Activated T-helper 1 cell treated with anti-CD3 and anti-CD28 coated beads, Interleukin-12 subunit alpha, Interleukin-12 subunit beta, Interleukin-2, Interleukin-4 antibody, amounts not matched to agents 30 ng/mL and 10 ng/mL and 1 ng/mL, durations not matched to agents 14 hours and 24 hours and 36 hours (primary cell): ENCODE measurements at regions of chr9 and their contacts with region 1.

Region 1: GRCh38 chr9:122827761-122828093 is 661 bp downstream of the PDCL start:
- DNase-seq: no peak
- H3K4me3 Mint-ChIP-seq: peak overlapping the region; percentile 96
- H3K27ac Mint-ChIP-seq: peak overlapping the region; percentile 84
- H3K4me1 Mint-ChIP-seq: peaks cover 36% of the 10 kb centered on the region
- H3K27me3 Mint-ChIP-seq: no peaks in the 10 kb centered on the region

Region 2: GRCh38 chr9:122264360-122265148 is 563.2 kb before region 1 on chr9 and contains the starts of genes MRRF and RBM18:
- intact Hi-C with region 1: loop called (anchors 2 kb)
- DNase-seq: peak; percentile 89
- H3K4me3 Mint-ChIP-seq: peak within 1 kb of the TSS; percentile 97
- H3K27ac Mint-ChIP-seq: peak within 1 kb of the TSS; percentile 100
- H3K4me1 Mint-ChIP-seq: peaks cover 38% of the 10 kb centered on the region
- H3K27me3 Mint-ChIP-seq: no peaks in the 10 kb centered on the region
- total RNA-seq, gene MRRF: 58.8 and 66.0 TPM in 2 replicates
- total RNA-seq, gene RBM18: 29.9 and 31.5 TPM in 2 replicates

Region 3: GRCh38 chr9:122754825-122755224 is 72.9 kb before region 1 on chr9:
- intact Hi-C with region 1: no loop called
- DNase-seq: no peak
- H3K4me3 Mint-ChIP-seq: no peak overlapping the region
- H3K27ac Mint-ChIP-seq: no peak overlapping the region
- H3K4me1 Mint-ChIP-seq: no peaks in the 10 kb centered on the region
- H3K27me3 Mint-ChIP-seq: no peaks in the 10 kb centered on the region

Region 4: DNA sequence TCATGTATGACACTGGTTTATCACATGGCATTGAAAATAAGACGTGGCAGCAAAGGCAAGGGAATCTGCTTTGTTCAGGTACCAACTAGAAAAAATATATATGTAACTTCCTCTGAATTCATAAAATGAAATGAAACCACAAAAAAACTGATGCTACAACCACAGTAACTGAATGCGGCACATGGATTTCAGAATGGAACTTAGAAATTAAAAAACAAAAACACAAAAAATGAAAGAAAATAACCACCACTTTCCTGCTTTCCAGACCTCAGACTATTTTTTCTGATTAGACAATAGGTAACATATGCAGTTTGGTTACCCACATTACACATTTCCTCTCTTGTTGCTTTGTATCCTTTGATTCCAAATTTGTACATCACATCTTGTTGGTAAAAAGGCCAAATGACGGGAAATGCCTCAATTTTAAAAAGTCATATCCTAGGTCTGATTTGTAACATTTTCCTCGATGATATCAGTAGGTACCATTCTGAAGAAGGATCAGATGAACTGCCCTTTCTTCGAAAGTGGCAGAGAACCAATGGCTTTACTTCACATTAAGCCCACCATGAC is 18.7 kb after region 1 on chr9:
- intact Hi-C with region 1: loop called (anchors 2 kb)
- DNase-seq: no peak
- H3K4me3 Mint-ChIP-seq: peak overlapping the region; percentile 28
- H3K27ac Mint-ChIP-seq: peak overlapping the region; percentile 90
- H3K4me1 Mint-ChIP-seq: peaks cover 46% of the 10 kb centered on the region
- H3K27me3 Mint-ChIP-seq: no peaks in the 10 kb centered on the region

Region 5: DNA sequence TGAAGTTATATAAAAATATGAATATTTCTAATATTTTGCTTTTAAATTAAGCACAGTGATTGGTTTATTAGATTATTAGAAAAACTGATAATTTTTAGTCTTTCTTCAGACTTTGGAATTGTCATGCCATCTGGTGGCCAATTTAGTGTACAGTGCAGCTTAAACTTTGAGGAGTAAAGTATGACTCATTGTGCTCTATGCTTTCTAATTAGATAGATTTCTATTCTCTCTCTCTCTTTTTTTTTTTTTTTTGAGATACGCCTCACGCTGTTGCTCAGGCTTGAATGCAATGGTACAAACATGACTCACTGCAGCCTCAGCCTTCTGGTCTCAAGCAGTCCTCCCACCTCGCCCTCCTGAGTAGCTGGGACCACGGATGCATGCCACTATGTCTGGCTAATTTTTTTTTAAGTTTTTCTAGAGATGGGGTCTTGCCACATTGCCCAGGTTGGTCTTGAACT is 163.7 kb after region 1 on chr9:
- intact Hi-C with region 1: loop called (anchors 1 kb)
- DNase-seq: no peak
- H3K4me3 Mint-ChIP-seq: no peak overlapping the region
- H3K27ac Mint-ChIP-seq: no peak overlapping the region
- H3K4me1 Mint-ChIP-seq: peaks cover 5% of the 10 kb centered on the region
- H3K27me3 Mint-ChIP-seq: no peaks in the 10 kb centered on the region